CD8-positive, alpha-beta T cell (primary cell): ENCODE measurements at regions of chr4 and their contacts with region 1.

Region 1: DNA sequence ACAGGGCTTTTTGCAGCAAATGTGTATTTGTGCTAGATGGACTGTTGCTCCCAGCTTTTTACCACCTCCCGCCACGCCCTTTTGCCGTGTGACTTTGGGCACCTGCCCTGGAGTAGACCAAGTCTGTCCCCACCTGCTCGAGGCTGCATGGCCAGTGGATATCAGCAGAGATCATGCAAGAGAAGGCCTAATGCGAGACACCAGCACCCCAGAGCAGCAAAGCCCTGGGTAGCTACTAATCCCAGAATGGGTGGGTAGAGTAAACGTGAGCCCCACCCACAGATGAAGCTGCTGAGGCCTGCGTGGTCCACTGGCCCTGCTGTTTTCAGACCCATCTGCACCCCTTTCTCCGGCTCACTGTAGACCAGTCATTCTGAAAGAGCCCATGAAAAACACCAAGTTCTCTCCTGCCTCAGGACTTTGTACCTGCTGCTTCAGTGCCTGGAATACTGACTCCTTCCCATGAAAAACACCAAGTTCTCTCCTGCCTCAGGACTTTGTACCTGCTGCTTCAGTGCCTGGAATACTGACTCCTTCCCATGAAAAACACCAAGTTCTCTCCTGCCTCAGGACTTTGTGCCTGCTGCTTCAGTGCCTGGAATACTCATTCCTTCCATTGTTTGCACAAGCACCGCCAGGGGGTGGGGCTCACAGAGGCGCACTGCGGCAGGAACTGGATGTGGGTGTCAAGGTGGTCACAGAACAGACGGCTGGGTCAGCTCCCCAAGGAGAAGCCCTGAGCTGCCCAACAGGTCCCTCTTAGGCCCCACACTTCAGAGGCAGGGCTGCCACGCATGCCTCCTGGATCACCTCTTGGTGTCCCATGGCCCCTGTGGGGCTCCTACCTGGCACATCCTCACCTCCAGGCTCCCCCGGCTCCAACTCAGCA is 5.1 kb upstream of the TNIP2 start:
- DNase-seq: no peak
- ATAC-seq: no peak
- H3K4me3 ChIP-seq: no peak overlapping the region
- H3K4me3 Mint-ChIP-seq: no peak overlapping the region
- H3K27ac ChIP-seq: no peak overlapping the region
- H3K27ac Mint-ChIP-seq: no peak overlapping the region
- H3K4me1 ChIP-seq: peaks cover 15% of the 10 kb centered on the region
- H3K4me1 Mint-ChIP-seq: peaks cover 15% of the 10 kb centered on the region
- H3K27me3 ChIP-seq: no peaks in the 10 kb centered on the region
- H3K27me3 Mint-ChIP-seq: no peaks in the 10 kb centered on the region
- CTCF ChIP-seq: no peak

Region 2: GRCh38 chr4:1763550-1764080 is 997.7 kb before region 1 on chr4:
- CTCF ChIA-PET with region 1: no interaction called
- POLR2A ChIA-PET with region 1: no interaction called
- intact Hi-C with region 1: no loop called
- DNase-seq: no peak
- ATAC-seq: no peak
- H3K4me3 ChIP-seq: no peak overlapping the region
- H3K4me3 Mint-ChIP-seq: no peak overlapping the region
- H3K27ac ChIP-seq: no peak overlapping the region
- H3K27ac Mint-ChIP-seq: no peak overlapping the region
- H3K4me1 ChIP-seq: no peaks in the 10 kb centered on the region
- H3K4me1 Mint-ChIP-seq: peaks cover 6% of the 10 kb centered on the region
- H3K27me3 ChIP-seq: peaks cover 0 to 9% of the 10 kb centered on the region in 2 experiments
- H3K27me3 Mint-ChIP-seq: peaks cover 25% of the 10 kb centered on the region
- CTCF ChIP-seq: no peak

Region 3: GRCh38 chr4:2811830-2812611 is 50.7 kb after region 1 on chr4:
- CTCF ChIA-PET with region 1: no interaction called
- POLR2A ChIA-PET with region 1: interaction called, 5 read pairs
- intact Hi-C with region 1: loop called in 1 of 2 experiments (anchors 2 kb)
- DNase-seq: peak in 8 of 9 experiments; percentile 39 to 82 (median 62)
- ATAC-seq: peak; percentile 62
- H3K4me3 ChIP-seq: peak overlapping the region; percentile 85 to 87
- H3K4me3 Mint-ChIP-seq: peak overlapping the region; percentile 96
- H3K27ac ChIP-seq: peak overlapping the region; percentile 72 to 84
- H3K27ac Mint-ChIP-seq: peak overlapping the region; percentile 98
- H3K4me1 ChIP-seq: peaks cover 47% of the 10 kb centered on the region
- H3K4me1 Mint-ChIP-seq: peaks cover 51% of the 10 kb centered on the region
- H3K27me3 ChIP-seq: no peaks in the 10 kb centered on the region
- H3K27me3 Mint-ChIP-seq: no peaks in the 10 kb centered on the region
- CTCF ChIP-seq: no peak

Region 4: DNA sequence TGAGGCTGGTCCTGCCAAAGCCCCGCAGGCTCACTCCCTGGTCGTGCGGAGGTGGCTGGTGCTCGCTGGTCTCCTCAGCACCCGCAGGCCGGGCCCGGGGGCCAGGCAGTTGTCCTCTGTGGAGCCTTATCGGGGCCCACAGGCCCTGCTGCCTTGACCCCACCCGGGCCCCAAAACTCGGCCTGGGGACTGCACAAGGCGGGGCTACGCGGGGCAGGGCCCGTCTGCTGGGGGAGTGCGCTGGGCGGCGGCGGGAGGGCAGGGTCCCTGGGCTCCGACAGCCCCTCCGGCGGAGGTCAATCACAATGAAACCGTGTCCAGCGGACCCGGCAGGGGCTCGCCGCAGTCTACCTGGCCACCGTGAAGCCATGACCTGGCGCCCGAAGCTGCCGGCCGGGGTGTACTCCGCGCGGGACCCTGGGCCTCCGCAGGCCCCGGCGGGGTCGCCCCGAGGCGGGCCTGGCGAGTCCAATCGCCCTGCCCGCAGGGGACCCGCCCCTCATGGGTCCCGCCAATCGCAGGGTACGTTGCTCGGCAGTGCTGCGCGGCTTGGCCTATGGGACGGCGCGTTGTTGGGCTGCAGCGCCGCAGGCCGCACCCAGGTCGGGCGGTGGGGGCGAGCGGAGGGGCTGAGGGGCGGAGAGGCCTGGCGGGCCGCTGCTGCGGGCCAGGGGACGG is 82.1 kb after region 1 on chr4 and contains the start of gene ADD1:
- CTCF ChIA-PET with region 1: interaction called, 10 read pairs
- POLR2A ChIA-PET with region 1: interaction called, 3 read pairs
- intact Hi-C with region 1: loop called in 1 of 2 experiments (anchors 1 kb)
- DNase-seq: peak; percentile 84 to 100 (median 96)
- ATAC-seq: peak; percentile 93
- H3K4me3 ChIP-seq: peak within 1 kb of the TSS; percentile 65 to 94
- H3K4me3 Mint-ChIP-seq: peak within 1 kb of the TSS; percentile 94
- H3K27ac ChIP-seq: peak within 1 kb of the TSS; percentile 71 to 78
- H3K27ac Mint-ChIP-seq: peak within 1 kb of the TSS; percentile 95
- H3K4me1 ChIP-seq: peaks cover 42% of the 10 kb centered on the region
- H3K4me1 Mint-ChIP-seq: peaks cover 64% of the 10 kb centered on the region
- H3K27me3 ChIP-seq: no peaks in the 10 kb centered on the region
- H3K27me3 Mint-ChIP-seq: no peaks in the 10 kb centered on the region
- CTCF ChIP-seq: no peak
- total RNA-seq, gene ADD1: 129 TPM

Region 5: DNA sequence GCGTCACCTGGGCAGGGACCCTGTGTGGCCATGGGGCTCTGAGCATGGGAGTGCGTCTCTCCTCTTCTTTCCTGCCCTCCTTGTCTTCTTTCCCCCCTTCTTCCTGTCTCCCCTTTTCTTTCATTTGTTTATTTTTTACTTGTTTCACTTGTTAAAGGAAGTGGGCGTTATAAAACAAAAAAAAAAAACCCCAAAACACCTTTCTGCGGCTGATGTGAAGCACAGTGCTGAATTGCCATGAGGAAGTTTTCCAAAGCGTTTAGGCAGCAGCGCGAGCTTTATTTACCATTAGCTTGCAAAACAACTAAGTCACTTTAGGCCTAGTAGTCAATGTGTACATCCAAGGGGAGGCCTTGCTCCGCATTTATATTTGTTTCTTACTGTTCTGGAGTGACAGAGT is 144.9 kb after region 1 on chr4:
- CTCF ChIA-PET with region 1: interaction called, 4 read pairs
- POLR2A ChIA-PET with region 1: no interaction called
- intact Hi-C with region 1: loop called in 1 of 2 experiments (anchors 1 kb)
- DNase-seq: peak in 1 of 9 experiments; percentile 56
- ATAC-seq: peak; percentile 63
- H3K4me3 ChIP-seq: no peak overlapping the region
- H3K4me3 Mint-ChIP-seq: peak overlapping the region; percentile 49
- H3K27ac ChIP-seq: peak overlapping the region; percentile 30 to 66
- H3K27ac Mint-ChIP-seq: peak overlapping the region; percentile 89
- H3K4me1 ChIP-seq: peaks cover 25% of the 10 kb centered on the region
- H3K4me1 Mint-ChIP-seq: peaks cover 30% of the 10 kb centered on the region
- H3K27me3 ChIP-seq: no peaks in the 10 kb centered on the region
- H3K27me3 Mint-ChIP-seq: no peaks in the 10 kb centered on the region
- CTCF ChIP-seq: no peak

Region 6: DNA sequence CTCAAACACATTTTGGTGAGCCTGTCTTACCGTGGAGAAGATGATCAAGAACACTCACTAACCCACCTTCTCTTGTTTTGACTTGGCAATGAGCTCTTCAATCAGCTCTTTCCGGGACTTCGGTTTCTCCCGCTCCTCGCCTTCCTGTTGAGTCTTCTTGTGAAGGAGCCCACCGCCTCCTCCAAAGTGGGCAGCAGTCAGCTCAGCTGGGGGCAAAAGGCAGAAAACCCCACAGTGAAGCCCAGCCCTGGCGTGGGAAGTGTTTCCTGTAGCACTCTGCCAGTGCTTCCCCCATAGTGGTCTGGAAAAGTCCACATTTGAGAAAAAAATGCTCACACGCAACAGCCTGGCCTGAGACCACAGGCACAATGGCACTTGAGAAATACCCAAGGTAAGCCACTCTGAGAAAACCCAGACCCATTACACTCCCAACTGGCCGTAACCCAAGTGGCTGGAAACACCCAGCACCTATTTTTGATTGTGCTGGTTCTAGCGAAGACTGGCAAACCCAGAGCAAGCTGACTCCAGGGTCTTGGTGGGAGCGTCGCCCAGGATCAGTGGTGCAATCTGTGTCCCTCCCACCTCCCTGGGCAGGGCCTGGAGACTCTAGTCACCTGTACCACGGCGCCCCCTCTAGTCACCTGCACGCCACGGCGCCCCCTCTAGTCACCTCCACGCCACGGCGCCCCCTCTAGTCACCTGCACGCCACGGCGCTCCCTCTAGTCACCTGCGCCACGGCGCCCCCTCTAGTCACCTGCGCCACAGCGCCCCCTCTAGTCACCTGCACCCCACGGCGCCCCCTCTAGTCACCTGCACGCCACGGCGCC is 193.3 kb after region 1 on chr4:
- CTCF ChIA-PET with region 1: interaction called, 4 read pairs
- POLR2A ChIA-PET with region 1: no interaction called
- intact Hi-C with region 1: loop called (anchors 2 kb)
- DNase-seq: peak in 5 of 9 experiments; percentile 39 to 80 (median 70)
- ATAC-seq: peak; percentile 80
- H3K4me3 ChIP-seq: no peak overlapping the region
- H3K4me3 Mint-ChIP-seq: no peak overlapping the region
- H3K27ac ChIP-seq: peak overlapping the region in 1 of 2 experiments; percentile 64
- H3K27ac Mint-ChIP-seq: peak overlapping the region; percentile 78
- H3K4me1 ChIP-seq: no peaks in the 10 kb centered on the region
- H3K4me1 Mint-ChIP-seq: peaks cover 29% of the 10 kb centered on the region
- H3K27me3 ChIP-seq: no peaks in the 10 kb centered on the region
- H3K27me3 Mint-ChIP-seq: no peaks in the 10 kb centered on the region
- CTCF ChIP-seq: peak; percentile 24

Region 7: GRCh38 chr4:3688018-3688998 is 927.0 kb after region 1 on chr4:
- CTCF ChIA-PET with region 1: no interaction called
- POLR2A ChIA-PET with region 1: no interaction called
- intact Hi-C with region 1: no loop called
- DNase-seq: no peak
- ATAC-seq: no peak
- H3K4me3 ChIP-seq: no peak overlapping the region
- H3K4me3 Mint-ChIP-seq: no peak overlapping the region
- H3K27ac ChIP-seq: no peak overlapping the region
- H3K27ac Mint-ChIP-seq: no peak overlapping the region
- H3K4me1 ChIP-seq: no peaks in the 10 kb centered on the region
- H3K4me1 Mint-ChIP-seq: no peaks in the 10 kb centered on the region
- H3K27me3 ChIP-seq: no peaks in the 10 kb centered on the region
- H3K27me3 Mint-ChIP-seq: peaks cover 2% of the 10 kb centered on the region
- CTCF ChIP-seq: no peak